Ovary (tissue), 10 donors: ENCODE measurements at regions of chr12 and their contacts with region 1.

Region 1: GRCh38 chr12:101490286-101490920 is 15.3 kb downstream of the SPIC start:
- DNase-seq: no peak
- H3K4me3 ChIP-seq: no peak overlapping the region
- H3K27ac ChIP-seq: no peak overlapping the region
- H3K4me1 ChIP-seq: no peaks in the 10 kb centered on the region
- H3K27me3 ChIP-seq: no peaks in the 10 kb centered on the region
- CTCF ChIP-seq: peak in 1 of 3 donors; percentile 14
- EP300 ChIP-seq: no peak
- POLR2A ChIP-seq: no peak

Region 2: GRCh38 chr12:101830367-101831325 is 340.2 kb after region 1 on chr12 and contains the start of gene GNPTAB:
- intact Hi-C with region 1: loop called in 1 of 4 experiments (anchors 10 kb)
- DNase-seq: peak; percentile 87 to 95 (median 93)
- H3K4me3 ChIP-seq: peak within 1 kb of the TSS; percentile 89
- H3K27ac ChIP-seq: peak within 1 kb of the TSS in 1 of 2 donors; percentile 4
- H3K4me1 ChIP-seq: peaks cover 2% of the 10 kb centered on the region
- H3K27me3 ChIP-seq: no peaks in the 10 kb centered on the region
- CTCF ChIP-seq: peak; percentile 49 to 84 (median 80)
- EP300 ChIP-seq: no peak
- POLR2A ChIP-seq: no peak
- total RNA-seq, gene GNPTAB: 10.3 to 24.2 (median 16.6) TPM